PC-3 (cell line): ENCODE measurements at regions of chr10 and their contacts with region 1.

Region 1: DNA sequence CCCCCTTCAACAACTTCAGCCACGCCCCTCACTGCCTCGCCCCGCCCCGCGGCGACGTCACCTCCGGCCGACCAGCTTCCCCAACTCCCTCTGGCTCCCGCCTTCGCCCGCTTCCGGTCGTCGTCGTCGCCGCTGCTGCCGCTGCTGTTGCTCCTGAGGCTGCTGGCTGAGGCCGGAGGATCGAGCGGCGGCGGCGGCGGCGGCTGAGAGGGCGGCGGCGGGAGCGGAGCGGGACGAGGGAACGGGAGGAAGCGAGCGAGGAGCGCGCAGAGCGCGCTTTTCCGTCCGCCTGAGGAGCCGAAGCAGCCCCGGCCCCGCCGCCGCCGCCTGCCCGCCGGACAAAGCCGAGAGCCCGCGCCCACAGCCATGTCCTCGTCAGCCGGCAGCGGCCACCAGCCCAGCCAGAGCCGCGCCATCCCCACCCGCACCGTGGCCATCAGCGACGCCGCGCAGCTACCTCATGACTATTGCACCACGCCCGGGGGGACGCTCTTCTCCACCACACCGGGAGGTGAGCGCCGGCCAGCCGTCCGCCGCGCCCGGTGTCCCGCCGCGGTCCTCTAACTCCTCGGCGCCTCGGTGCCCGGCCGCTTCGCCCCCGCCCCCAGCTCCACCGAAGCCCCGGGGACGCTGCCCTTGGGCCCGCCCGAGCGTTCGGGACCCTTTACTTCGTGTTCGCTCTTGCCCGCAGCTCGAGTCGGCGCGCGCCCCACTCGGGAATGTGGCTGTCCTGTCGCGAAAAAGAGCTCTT is at the start of gene EIF4EBP2:
- DNase-seq: peak; percentile 99
- ATAC-seq: peak; percentile 31
- H3K4me3 ChIP-seq: peak within 1 kb of the TSS; percentile 75
- H3K27ac ChIP-seq: peak within 1 kb of the TSS; percentile 18
- H3K4me1 ChIP-seq: peaks cover 24% of the 10 kb centered on the region
- H3K27me3 ChIP-seq: no peaks in the 10 kb centered on the region
- CTCF ChIP-seq: no peak
- total RNA-seq, gene EIF4EBP2: 29.2 and 32.6 TPM in 2 replicates

Region 2: GRCh38 chr10:70391654-70392053 is 12.6 kb before region 1 on chr10:
- CTCF ChIA-PET with region 1: interaction called, 36 read pairs
- POLR2A ChIA-PET with region 1: interaction called, 18 read pairs
- intact Hi-C with region 1: loop called (anchors 1 kb)
- DNase-seq: no peak
- ATAC-seq: no peak
- H3K4me3 ChIP-seq: no peak overlapping the region
- H3K27ac ChIP-seq: no peak overlapping the region
- H3K4me1 ChIP-seq: peaks cover 8% of the 10 kb centered on the region; the same call in 1 of the 2 replicates
- H3K27me3 ChIP-seq: no peaks in the 10 kb centered on the region
- CTCF ChIP-seq: no peak